ENCODE measurements at regions of chr6 and their contacts with region 1.

Region 1: GRCh38 chr6:26596579-26597388 is at the start of gene ABT1:
- DNase-seq: peak; percentile 98
- H3K4me3 Mint-ChIP-seq: no peak within 1 kb of the TSS
- H3K27ac Mint-ChIP-seq: no peak within 1 kb of the TSS
- H3K4me1 Mint-ChIP-seq: peaks cover 44% of the 10 kb centered on the region
- H3K27me3 Mint-ChIP-seq: peaks cover 26% of the 10 kb centered on the region
- total RNA-seq, gene ABT1: 22.6 to 22.7 TPM

Region 2: DNA sequence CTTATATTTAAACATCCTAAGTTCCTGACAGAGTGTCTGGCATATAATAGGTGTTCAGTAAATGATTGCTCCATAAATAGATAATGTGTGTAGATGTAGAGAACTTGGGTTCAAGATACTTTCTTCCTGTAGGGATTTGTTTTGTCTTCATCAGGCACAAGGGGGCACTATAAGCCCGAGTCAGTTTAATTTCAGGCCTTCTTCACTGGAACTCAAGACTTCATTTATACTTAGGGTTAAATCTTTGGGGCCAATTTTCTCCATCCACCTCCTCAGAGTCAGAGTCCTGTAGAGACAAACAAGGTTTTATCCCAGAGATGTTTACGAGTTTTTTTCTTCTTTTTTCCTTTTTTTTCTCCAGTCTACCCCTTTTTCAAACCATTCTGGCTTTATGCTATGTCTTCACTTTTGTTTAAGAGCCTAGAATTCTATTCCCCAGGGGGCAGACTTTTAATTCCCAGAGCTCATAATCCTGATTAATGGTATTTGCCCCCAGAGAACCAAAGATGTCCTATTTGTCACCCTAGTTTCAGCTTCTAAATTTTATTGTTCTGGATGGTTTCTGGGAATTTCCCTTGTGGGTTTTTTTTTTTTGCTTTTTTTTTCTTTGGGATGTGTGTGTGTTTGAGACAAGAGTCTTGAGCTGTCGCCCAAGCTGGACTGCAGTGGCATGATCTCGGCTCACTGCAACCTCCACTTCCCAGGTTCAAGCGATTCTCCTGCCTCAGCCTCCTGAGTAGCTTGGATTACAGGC is 421.2 kb before region 1 on chr6:
- CTCF ChIA-PET with region 1: interaction called, 7 read pairs
- POLR2A ChIA-PET with region 1: no interaction called
- intact Hi-C with region 1: loop called (anchors 2 kb)
- DNase-seq: peak; percentile 63
- H3K4me3 Mint-ChIP-seq: peak overlapping the region; percentile 24
- H3K27ac Mint-ChIP-seq: peak overlapping the region; percentile 43
- H3K4me1 Mint-ChIP-seq: peaks cover 31% of the 10 kb centered on the region
- H3K27me3 Mint-ChIP-seq: no peaks in the 10 kb centered on the region

Region 3: GRCh38 chr6:26329763-26330511 is 266.8 kb before region 1 on chr6:
- CTCF ChIA-PET with region 1: interaction called, 17 read pairs
- POLR2A ChIA-PET with region 1: no interaction called
- intact Hi-C with region 1: no loop called
- DNase-seq: peak; percentile 77
- H3K4me3 Mint-ChIP-seq: peak overlapping the region; percentile 80
- H3K27ac Mint-ChIP-seq: peak overlapping the region; percentile 84
- H3K4me1 Mint-ChIP-seq: peaks cover 40% of the 10 kb centered on the region
- H3K27me3 Mint-ChIP-seq: peaks cover 43% of the 10 kb centered on the region

Region 4: DNA sequence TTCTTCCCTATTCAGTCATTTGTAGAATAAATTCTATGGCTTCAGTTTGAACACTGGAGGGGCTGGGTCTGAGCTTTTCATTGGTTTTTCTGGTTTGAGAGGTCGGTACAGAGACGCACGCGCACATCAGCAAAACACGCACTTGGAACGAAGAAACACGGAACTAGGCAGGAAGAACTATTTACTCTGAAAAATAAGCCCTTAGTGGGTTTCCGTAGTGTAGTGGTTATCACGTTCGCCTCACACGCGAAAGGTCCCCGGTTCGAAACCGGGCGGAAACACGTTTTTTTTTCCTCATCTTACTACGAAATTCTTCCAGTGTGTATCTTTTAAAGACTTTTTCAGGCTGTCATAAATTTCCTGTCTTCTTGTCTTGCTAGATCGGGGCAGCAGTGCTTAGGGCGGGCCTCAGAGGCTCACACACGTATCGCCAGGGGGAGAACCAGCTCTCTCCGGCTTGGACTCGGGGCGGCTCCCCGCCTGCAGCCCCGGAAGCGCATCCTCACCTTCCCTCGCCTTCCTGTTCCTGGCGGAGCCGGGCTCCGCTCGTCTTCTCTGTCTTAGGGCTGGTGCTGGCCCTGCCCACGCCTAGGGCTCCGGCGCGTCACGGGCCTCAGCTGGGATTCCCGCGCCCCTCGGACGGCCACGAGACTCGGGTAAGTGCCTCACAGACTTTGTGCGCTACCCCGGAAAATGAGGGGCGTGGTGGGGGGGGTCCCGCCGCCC is 58.8 kb before region 1 on chr6 and contains the start of gene HMGN4:
- CTCF ChIA-PET with region 1: interaction called, 12 read pairs
- POLR2A ChIA-PET with region 1: interaction called, 9 read pairs
- intact Hi-C with region 1: loop called (anchors 5 kb)
- DNase-seq: peak; percentile 88
- H3K4me3 Mint-ChIP-seq: peak within 1 kb of the TSS; percentile 84
- H3K27ac Mint-ChIP-seq: peak within 1 kb of the TSS; percentile 97
- H3K4me1 Mint-ChIP-seq: peaks cover 64% of the 10 kb centered on the region
- H3K27me3 Mint-ChIP-seq: peaks cover 2% of the 10 kb centered on the region
- total RNA-seq, gene HMGN4: 93.2 to 96.0 TPM

Region 5: GRCh38 chr6:26576929-26577719 is 19.7 kb before region 1 on chr6:
- CTCF ChIA-PET with region 1: interaction called, 179 read pairs
- POLR2A ChIA-PET with region 1: interaction called, 4 read pairs
- intact Hi-C with region 1: loop called (anchors 1 kb)
- DNase-seq: peak; percentile 82
- H3K4me3 Mint-ChIP-seq: peak overlapping the region; percentile 80
- H3K27ac Mint-ChIP-seq: peak overlapping the region; percentile 84
- H3K4me1 Mint-ChIP-seq: peaks cover 28% of the 10 kb centered on the region
- H3K27me3 Mint-ChIP-seq: no peaks in the 10 kb centered on the region